Panc1 (cell line): ENCODE measurements at regions of chr10 and their contacts with region 1.

Region 1: GRCh38 chr10:116796910-116797513 is 52.3 kb upstream of the ENO4 start:
- DNase-seq: peak; percentile 38
- ATAC-seq: peak; percentile 98
- H3K4me3 ChIP-seq: no peak overlapping the region
- H3K27ac ChIP-seq: no peak overlapping the region
- H3K4me1 ChIP-seq: no peaks in the 10 kb centered on the region
- H3K27me3 ChIP-seq: no peaks in the 10 kb centered on the region; the same call in 1 of the 2 replicates
- CTCF ChIP-seq: peak; percentile 96

Region 2: DNA sequence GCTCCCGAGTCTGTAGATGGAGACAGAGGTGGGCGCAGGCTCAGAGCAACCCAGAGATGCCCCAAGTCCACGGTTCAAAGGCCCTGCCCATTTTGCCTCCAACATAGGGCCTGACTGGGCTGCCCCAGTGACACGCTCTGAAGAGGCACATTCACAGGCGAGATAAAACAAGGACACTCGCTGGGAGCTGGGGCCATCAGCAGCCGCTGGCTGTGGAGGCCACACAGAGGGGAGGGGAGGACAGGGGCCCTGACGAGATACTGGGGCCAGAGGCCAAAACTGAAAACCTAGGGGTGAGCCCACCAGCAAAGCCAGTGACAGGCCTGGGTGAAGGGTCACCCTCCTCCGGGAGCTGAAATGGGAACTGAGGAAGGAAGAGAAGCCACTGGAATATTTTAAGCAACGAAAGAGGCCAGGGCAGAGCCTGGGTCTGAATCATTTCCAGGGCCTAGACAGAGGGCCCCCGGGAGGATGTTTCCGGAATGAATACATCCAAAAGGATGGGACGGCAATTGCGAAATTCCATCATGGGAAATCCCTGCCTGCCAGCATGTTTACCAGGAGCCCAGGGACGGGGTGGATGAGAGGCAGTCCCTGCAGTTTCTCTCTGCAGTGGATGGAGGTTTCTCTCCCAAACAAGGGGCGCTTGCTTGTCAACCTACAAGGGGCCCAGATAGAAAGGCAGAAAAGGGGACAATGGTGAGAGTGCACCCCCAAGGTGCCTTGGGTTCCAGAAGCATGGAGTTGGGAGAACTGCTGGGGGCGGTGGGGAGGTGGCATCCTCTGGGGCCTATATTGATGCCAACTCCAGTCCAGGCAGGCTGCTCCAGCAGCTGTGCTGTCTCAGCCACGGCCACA is 25.7 kb before region 1 on chr10:
- CTCF ChIA-PET with region 1: interaction called, 14 read pairs
- POLR2A ChIA-PET with region 1: no interaction called
- in situ Hi-C with region 1: no loop called
- intact Hi-C with region 1: no loop called
- DNase-seq: no peak
- ATAC-seq: no peak
- H3K4me3 ChIP-seq: no peak overlapping the region
- H3K27ac ChIP-seq: no peak overlapping the region
- H3K4me1 ChIP-seq: no peaks in the 10 kb centered on the region
- H3K27me3 ChIP-seq: no peaks in the 10 kb centered on the region
- CTCF ChIP-seq: no peak

Region 3: DNA sequence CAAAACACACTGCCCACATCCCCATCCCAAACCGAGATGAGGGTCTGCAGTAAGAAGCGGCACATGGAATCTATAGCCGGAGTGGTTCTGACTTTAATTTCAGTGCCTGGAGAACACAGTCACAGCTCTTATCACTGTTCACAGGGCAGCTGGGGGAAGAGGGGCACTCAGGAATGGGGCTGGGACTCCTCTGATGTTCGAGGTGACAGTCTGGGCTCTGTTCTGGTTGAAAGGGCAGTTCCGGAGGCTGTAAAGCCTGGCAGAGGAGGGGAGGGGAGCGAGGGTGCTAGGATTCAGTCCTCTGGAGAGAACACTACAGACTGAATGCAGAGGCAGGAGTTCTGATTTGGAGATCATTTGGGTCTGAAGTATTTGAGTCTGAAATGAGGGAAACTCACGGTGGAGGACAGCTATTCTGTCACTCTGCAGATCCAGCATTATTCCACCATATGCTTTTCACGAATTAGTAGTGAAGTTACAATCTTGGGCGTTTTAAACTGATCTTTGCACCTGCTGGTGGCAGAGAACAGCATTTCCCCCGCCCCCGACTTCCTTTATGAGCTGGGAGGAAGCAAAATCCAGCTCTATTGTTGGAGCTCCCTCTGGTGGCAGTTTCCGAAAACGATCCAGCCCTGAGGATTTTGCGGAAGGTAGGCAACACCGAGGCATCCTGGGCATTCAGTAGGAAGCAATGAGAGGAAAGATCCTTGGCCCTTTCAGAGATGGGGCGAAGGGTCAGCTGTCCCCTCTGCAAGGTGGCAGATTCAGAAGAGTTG is 377.6 kb after region 1 on chr10:
- CTCF ChIA-PET with region 1: interaction called, 34 read pairs
- POLR2A ChIA-PET with region 1: interaction called, 3 read pairs
- in situ Hi-C with region 1: no loop called
- intact Hi-C with region 1: loop called (anchors 1 kb)
- DNase-seq: peak; percentile 79
- ATAC-seq: peak; percentile 91
- H3K4me3 ChIP-seq: peak overlapping the region; percentile 48 to 75
- H3K27ac ChIP-seq: no peak overlapping the region
- H3K4me1 ChIP-seq: peaks cover 4% of the 10 kb centered on the region; the same call in 1 of the 2 replicates
- H3K27me3 ChIP-seq: peaks cover 33% of the 10 kb centered on the region
- CTCF ChIP-seq: peak; percentile 96

Region 4: GRCh38 chr10:117284716-117285494 is 487.9 kb after region 1 on chr10:
- CTCF ChIA-PET with region 1: interaction called, 12 read pairs
- POLR2A ChIA-PET with region 1: no interaction called
- in situ Hi-C with region 1: no loop called
- intact Hi-C with region 1: no loop called
- DNase-seq: no peak
- ATAC-seq: no peak
- H3K4me3 ChIP-seq: no peak overlapping the region
- H3K27ac ChIP-seq: no peak overlapping the region
- H3K4me1 ChIP-seq: no peaks in the 10 kb centered on the region
- H3K27me3 ChIP-seq: no peaks in the 10 kb centered on the region
- CTCF ChIP-seq: no peak